Heart right ventricle (tissue), 16 donors: ENCODE measurements at regions of chr18 and their contacts with region 1.

Region 1: GRCh38 chr18:10059610-10060468 is 146.0 kb downstream of the VAPA start:
- DNase-seq: peak in 1 of 2 donors; percentile 43
- ATAC-seq: peak in 4 of 8 donors; percentile 6 to 24 (median 18)
- H3K4me3 ChIP-seq: peak overlapping the region in 4 of 10 donors; percentile 9 to 30 (median 14)
- H3K27ac ChIP-seq: peak overlapping the region in 8 of 10 donors; percentile 26 to 86 (median 66)
- H3K4me1 ChIP-seq: peaks cover 4 to 87% (median 70%) of the 10 kb centered on the region in 9 donors
- H3K27me3 ChIP-seq: no peaks in the 10 kb centered on the region
- CTCF ChIP-seq: no peak

Region 2: GRCh38 chr18:10113121-10114022 is 53.5 kb after region 1 on chr18:
- intact Hi-C with region 1: loop called in 1 of 10 experiments (anchors 1 kb)
- DNase-seq: no peak
- ATAC-seq: peak in 1 of 8 donors; percentile 64
- H3K4me3 ChIP-seq: no peak overlapping the region
- H3K27ac ChIP-seq: no peak overlapping the region
- H3K4me1 ChIP-seq: peaks cover 0 to 18% (median 0%) of the 10 kb centered on the region in 9 donors
- H3K27me3 ChIP-seq: no peaks in the 10 kb centered on the region
- CTCF ChIP-seq: no peak

Region 3: GRCh38 chr18:10140461-10141282 is 80.8 kb after region 1 on chr18:
- intact Hi-C with region 1: loop called in 1 of 10 experiments (anchors 10 kb)
- DNase-seq: no peak
- ATAC-seq: peak in 2 of 8 donors; percentile 8 to 14
- H3K4me3 ChIP-seq: no peak overlapping the region
- H3K27ac ChIP-seq: no peak overlapping the region
- H3K4me1 ChIP-seq: peaks cover 0 to 30% (median 17%) of the 10 kb centered on the region in 9 donors
- H3K27me3 ChIP-seq: no peaks in the 10 kb centered on the region
- CTCF ChIP-seq: no peak

Region 4: GRCh38 chr18:10169064-10169562 is 109.3 kb after region 1 on chr18:
- intact Hi-C with region 1: loop called in 1 of 10 experiments (anchors 10 kb)
- DNase-seq: no peak
- ATAC-seq: no peak
- H3K4me3 ChIP-seq: no peak overlapping the region
- H3K27ac ChIP-seq: no peak overlapping the region
- H3K4me1 ChIP-seq: peaks cover 0 to 17% (median 5%) of the 10 kb centered on the region in 9 donors
- H3K27me3 ChIP-seq: no peaks in the 10 kb centered on the region
- CTCF ChIP-seq: no peak